CD8-positive, alpha-beta T cell (primary cell): ENCODE measurements at regions of chr17 and their contacts with region 1.

Region 1: DNA sequence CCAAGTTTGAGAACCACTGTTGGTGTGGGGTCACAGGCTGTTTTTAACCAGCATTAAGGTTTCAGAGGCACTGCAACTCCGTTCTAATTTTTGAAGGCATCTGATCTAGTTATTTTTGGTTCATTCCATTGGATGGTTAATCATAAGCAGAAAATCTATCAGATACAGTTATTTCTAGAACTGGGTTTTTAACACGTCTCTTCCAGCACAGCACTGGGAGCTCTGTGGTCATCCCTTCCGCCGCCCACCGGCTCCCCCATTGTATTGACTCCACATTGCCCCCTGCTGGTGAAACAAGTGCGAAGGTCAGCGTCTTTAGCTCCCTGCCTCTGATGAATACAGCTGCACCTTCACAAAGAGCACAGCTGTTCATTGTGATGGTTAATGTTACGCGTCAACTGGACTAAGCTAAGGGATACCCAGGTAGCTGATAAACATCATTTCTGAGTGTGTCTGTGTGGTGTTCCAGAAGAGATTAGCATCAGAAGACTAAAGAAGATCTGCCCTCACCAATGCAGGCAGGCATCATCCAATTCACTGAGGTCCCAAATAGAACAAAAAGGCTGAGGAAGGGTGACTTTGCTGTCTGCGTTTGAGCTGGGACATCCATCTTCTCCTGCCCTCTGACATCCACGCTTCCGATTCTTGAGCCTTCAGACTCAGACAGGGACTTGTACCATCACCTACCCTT is 8.5 kb downstream of the CCL18 start:
- DNase-seq: peak; percentile 20 to 85 (median 58)
- ATAC-seq: peak; percentile 74
- H3K4me3 ChIP-seq: no peak overlapping the region
- H3K4me3 Mint-ChIP-seq: no peak overlapping the region
- H3K27ac ChIP-seq: peak overlapping the region in 1 of 2 experiments; percentile 47
- H3K27ac Mint-ChIP-seq: peak overlapping the region; percentile 47
- H3K4me1 ChIP-seq: peaks cover 10% of the 10 kb centered on the region
- H3K4me1 Mint-ChIP-seq: peaks cover 15% of the 10 kb centered on the region
- H3K27me3 ChIP-seq: no peaks in the 10 kb centered on the region
- H3K27me3 Mint-ChIP-seq: no peaks in the 10 kb centered on the region
- CTCF ChIP-seq: peak; percentile 57

Region 2: GRCh38 chr17:35969558-35970380 is 102.8 kb before region 1 on chr17:
- CTCF ChIA-PET with region 1: interaction called, 8 read pairs
- POLR2A ChIA-PET with region 1: no interaction called
- intact Hi-C with region 1: loop called (anchors 2 to 5 kb)
- DNase-seq: peak; percentile 49 to 84 (median 74)
- ATAC-seq: peak; percentile 46
- H3K4me3 ChIP-seq: no peak overlapping the region
- H3K4me3 Mint-ChIP-seq: no peak overlapping the region
- H3K27ac ChIP-seq: no peak overlapping the region
- H3K27ac Mint-ChIP-seq: peak overlapping the region; percentile 4
- H3K4me1 ChIP-seq: no peaks in the 10 kb centered on the region
- H3K4me1 Mint-ChIP-seq: no peaks in the 10 kb centered on the region
- H3K27me3 ChIP-seq: no peaks in the 10 kb centered on the region
- H3K27me3 Mint-ChIP-seq: no peaks in the 10 kb centered on the region
- CTCF ChIP-seq: peak; percentile 80

Region 3: DNA sequence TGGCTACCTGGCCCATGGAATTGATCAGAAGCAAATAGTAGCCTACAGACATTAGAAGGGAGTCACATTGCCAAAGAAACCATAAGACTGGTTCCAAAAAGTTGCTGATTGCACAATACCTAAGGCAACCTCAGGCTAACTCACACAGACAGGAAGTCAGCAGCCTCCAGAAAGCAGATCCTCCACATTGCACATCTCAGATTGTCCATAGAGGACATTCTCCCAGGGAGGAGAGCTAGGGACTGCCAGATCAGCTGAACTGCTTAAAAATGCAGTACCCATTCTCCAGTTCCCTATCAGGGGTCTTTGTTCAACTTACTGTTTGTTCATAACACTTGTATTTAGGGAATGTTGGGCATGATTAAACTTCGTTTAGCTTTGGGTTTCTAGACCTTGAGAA is 13.2 kb after region 1 on chr17:
- CTCF ChIA-PET with region 1: interaction called, 17 read pairs
- POLR2A ChIA-PET with region 1: interaction called, 6 read pairs
- intact Hi-C with region 1: no loop called
- DNase-seq: peak in 2 of 9 experiments; percentile 47 to 63
- ATAC-seq: no peak
- H3K4me3 ChIP-seq: no peak overlapping the region
- H3K4me3 Mint-ChIP-seq: no peak overlapping the region
- H3K27ac ChIP-seq: peak overlapping the region in 1 of 2 experiments; percentile 46
- H3K27ac Mint-ChIP-seq: peak overlapping the region; percentile 41
- H3K4me1 ChIP-seq: peaks cover 25% of the 10 kb centered on the region
- H3K4me1 Mint-ChIP-seq: peaks cover 58% of the 10 kb centered on the region
- H3K27me3 ChIP-seq: no peaks in the 10 kb centered on the region
- H3K27me3 Mint-ChIP-seq: no peaks in the 10 kb centered on the region
- CTCF ChIP-seq: no peak

Region 4: DNA sequence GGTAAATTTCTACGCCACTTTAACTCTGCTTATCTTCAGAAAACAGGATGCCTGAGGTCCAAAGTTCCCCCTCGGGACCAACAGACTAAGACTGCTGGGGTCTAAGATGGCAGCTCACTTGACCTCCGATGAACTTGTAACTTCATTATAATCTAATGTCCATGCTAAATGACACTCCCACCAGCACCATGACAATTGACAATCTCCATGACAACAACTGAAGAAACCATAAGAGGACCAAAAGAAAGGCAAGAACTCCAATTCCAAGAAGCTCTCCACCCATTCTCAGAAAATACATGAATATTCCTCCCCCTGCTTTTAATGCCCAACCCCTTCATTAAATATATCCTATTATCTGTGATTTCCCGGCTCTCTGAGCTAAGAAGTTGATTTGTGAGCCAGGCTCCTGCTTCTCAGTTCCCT is 38.5 kb after region 1 on chr17:
- CTCF ChIA-PET with region 1: interaction called, 3 read pairs
- POLR2A ChIA-PET with region 1: no interaction called
- intact Hi-C with region 1: loop called in 1 of 2 experiments (anchors 5 kb)
- DNase-seq: no peak
- ATAC-seq: no peak
- H3K4me3 ChIP-seq: no peak overlapping the region
- H3K4me3 Mint-ChIP-seq: no peak overlapping the region
- H3K27ac ChIP-seq: no peak overlapping the region
- H3K27ac Mint-ChIP-seq: no peak overlapping the region
- H3K4me1 ChIP-seq: no peaks in the 10 kb centered on the region
- H3K4me1 Mint-ChIP-seq: peaks cover 17% of the 10 kb centered on the region
- H3K27me3 ChIP-seq: no peaks in the 10 kb centered on the region
- H3K27me3 Mint-ChIP-seq: peaks cover 4% of the 10 kb centered on the region
- CTCF ChIP-seq: no peak

Region 5: GRCh38 chr17:36148559-36149295 is 76.2 kb after region 1 on chr17:
- CTCF ChIA-PET with region 1: interaction called, 34 read pairs
- POLR2A ChIA-PET with region 1: interaction called, 4 read pairs
- intact Hi-C with region 1: loop called in 1 of 2 experiments (anchors 5 kb)
- DNase-seq: peak; percentile 43 to 84 (median 66)
- ATAC-seq: peak; percentile 85
- H3K4me3 ChIP-seq: peak overlapping the region in 1 of 2 experiments; percentile 23
- H3K4me3 Mint-ChIP-seq: peak overlapping the region; percentile 2
- H3K27ac ChIP-seq: no peak overlapping the region
- H3K27ac Mint-ChIP-seq: no peak overlapping the region
- H3K4me1 ChIP-seq: no peaks in the 10 kb centered on the region
- H3K4me1 Mint-ChIP-seq: peaks cover 5% of the 10 kb centered on the region
- H3K27me3 ChIP-seq: no peaks in the 10 kb centered on the region
- H3K27me3 Mint-ChIP-seq: peaks cover 15% of the 10 kb centered on the region
- CTCF ChIP-seq: peak; percentile 100